AG04449 (cell line): ENCODE measurements at regions of chr11 and their contacts with region 1.

Region 1: DNA sequence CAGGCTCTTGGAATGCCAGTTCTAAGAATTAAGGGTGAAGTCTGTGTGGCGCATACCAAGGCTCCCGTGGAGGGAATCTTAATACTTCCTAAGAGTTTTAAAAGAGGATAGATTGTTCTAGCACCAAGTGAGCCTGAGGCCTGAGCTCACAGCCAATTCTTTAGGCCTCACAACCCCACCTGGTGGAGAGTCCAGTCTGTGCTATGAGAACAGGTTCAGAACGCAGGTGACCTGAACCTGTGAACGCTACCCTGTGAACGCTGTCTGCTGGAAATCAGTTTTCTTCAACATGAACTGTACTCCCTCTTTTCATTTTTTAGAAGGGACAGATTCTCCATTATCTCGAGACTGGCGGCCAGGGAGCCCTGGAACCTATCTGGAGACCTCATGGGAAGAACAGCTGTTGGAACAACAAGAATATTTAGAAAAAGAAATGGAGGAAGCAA is 43.2 kb upstream of the DLAT start:
- DNase-seq: no peak
- H3K4me3 ChIP-seq: no peak overlapping the region
- CTCF ChIP-seq: peak; percentile 60

Region 2: DNA sequence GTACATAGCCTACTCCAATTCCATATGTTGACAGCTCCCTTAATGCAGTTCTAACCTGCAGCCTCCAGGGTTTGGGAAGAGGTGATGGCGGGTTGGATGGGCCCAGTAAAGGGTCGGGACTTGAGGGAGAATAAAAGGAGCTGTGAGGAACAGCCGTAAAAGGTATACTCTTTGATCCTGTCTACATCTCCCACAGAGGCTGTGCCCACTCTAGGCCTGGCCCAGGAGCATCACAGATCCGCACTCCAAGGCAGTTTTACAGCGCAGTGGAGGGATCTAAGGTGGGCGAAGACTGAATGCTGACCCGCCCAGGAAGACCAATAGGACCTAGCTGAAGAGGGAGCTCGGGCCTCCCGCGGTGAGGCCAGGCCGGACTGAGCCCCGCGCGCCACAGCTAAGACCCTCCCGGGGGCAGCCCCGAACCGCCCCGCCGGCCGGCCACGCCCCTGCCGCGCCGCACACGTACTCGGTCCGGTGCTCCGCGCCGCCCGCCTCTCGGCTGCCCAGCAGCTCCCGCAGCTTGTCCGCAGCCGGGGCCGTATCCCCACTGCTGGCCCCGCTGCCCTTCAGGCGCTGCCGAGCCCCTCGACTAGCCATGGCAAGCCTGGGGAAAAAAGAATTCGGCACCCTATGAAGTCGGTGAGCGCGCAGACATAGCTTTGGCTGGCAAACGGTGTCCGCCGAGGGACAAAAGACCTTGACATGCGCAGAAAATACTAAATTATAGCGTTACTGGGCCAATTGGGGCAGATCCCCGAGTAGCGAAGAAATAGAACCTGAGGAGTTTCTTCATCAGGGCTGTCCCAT is 111.0 kb before region 1 on chr11 and contains the start of gene ALG9:
- CTCF ChIA-PET with region 1: interaction called, 50 read pairs
- POLR2A ChIA-PET with region 1: interaction called, 3 read pairs
- DNase-seq: peak; percentile 24
- H3K4me3 ChIP-seq: peak within 1 kb of the TSS; percentile 90
- CTCF ChIP-seq: peak; percentile 43

Region 3: DNA sequence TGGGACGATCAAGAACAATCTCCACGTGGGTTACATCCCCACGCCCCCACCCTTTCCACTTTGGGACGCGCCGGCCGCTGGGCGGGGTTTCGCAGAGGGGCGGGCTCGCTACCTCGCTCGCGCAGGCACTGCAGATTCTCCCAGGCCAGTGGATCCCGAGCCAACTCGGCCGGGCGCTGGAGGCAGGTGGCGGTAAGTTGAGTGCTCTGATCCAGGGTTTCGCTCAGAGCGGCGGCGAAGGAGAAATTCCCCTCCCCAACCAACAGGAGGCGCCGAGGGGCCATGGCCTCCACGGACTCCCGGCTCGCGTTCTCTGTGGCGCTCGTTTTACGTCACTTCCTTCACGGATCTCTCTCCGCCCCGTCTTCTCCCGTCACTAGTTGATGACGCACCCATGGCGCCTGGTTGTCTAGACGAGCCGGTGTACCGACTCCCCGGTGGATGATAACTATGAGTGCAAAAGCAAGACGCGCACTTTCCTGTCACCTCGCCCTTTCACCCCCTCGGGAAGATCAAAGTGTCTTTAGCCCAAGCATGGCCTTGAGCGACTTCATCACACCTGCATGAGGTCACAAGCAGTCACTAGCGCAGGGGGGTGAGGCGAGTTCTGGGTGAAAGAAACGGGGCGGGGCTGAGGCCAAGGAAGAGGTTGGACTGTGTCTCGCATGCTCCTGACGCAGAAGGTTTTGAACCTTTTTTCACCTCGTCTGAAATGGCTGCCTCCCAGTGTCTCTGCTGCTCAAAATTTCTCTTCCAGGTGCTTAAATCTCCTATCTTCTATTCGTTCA is 103.0 kb before region 1 on chr11 and contains the starts of genes CFAP68 and FDXACB1:
- CTCF ChIA-PET with region 1: interaction called, 50 read pairs
- POLR2A ChIA-PET with region 1: no interaction called
- DNase-seq: peak; percentile 76
- H3K4me3 ChIP-seq: peak within 1 kb of the TSS; percentile 94
- CTCF ChIP-seq: peak; percentile 95

Region 4: DNA sequence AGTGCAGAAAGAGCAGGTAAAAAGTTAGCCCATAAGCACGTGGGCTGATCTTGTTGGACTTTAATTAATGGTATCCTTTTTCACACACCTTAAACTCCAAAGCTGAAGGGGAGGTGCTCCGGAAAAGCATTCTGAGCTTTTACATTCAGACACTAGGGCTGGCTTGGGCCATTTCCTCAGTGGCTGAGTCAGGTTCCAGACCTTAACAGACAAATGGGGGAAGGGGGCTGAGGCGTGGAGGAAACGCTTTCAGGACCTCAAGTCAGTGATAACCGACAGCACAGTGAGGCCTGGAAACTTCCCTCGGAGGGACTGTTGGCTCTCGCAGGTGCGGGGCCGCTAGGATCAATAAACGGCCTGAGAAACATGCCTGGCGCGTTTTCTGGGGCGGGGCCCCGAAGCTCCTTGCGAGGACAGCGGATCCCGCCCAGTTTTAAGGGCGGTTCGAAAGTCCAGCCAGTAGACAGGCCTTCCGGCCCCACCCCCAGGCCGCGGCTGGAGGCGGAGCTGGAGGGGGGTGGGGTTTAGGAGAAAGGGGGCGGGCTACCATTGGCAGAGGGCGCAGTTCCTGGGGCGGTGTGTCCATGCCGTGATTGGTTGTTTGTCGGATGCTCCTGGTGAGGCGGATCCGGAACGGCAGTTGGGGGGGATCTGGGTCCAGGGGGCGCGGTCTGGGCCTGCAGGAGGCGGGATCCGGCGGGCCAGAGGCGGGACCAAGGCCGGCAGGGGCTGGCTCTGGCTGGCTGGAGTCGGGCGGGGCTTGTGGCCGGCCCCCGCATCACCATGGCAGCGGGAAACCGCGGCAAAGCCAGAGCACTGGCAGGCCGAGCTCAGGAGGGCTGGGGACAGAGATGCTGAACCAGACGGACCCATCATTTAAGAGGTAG is 55.3 kb before region 1 on chr11:
- CTCF ChIA-PET with region 1: interaction called, 134 read pairs
- POLR2A ChIA-PET with region 1: interaction called, 5 read pairs
- DNase-seq: peak; percentile 85
- H3K4me3 ChIP-seq: peak overlapping the region; percentile 49
- CTCF ChIP-seq: no peak

Region 5: GRCh38 chr11:111938687-111939160 is 43.3 kb before region 1 on chr11:
- CTCF ChIA-PET with region 1: interaction called, 34 read pairs
- POLR2A ChIA-PET with region 1: interaction called, 3 read pairs
- DNase-seq: no peak
- H3K4me3 ChIP-seq: peak overlapping the region; percentile 69
- CTCF ChIP-seq: no peak

Region 6: GRCh38 chr11:111944651-111945051 is 37.4 kb before region 1 on chr11:
- CTCF ChIA-PET with region 1: interaction called, 34 read pairs
- POLR2A ChIA-PET with region 1: interaction called, 4 read pairs
- DNase-seq: peak; percentile 77
- H3K4me3 ChIP-seq: no peak overlapping the region
- CTCF ChIP-seq: no peak

Region 7: DNA sequence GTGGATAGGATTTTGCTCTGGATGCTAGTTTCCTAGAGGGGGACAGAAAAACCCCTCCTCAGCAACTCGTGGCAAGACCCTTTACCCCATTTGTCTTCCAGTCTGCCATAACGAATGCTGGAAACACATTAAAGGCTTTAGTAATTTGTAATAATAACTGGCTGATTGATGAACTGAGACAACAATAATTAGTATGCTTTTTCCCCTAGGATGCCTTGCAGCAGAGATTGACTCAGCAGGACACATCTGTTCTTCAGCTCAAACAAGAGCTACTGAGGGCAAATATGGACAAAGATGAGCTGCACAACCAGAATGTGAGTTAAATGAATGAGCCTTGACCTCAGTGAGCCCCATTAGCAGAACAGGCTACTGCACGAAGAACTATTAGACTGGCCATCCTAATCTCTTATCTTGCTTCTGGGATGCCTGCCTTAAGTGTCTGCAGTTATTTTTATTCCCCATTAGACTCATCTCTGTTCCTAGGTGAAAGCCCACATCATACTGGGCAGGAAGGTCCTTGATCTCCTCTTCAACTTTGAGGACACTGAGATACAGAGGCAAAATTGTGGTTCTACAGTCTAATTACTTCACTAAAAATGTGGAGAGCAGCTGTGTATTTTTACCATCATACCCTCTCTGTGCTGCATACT is 10.3 kb after region 1 on chr11:
- CTCF ChIA-PET with region 1: interaction called, 13 read pairs
- POLR2A ChIA-PET with region 1: no interaction called
- DNase-seq: no peak
- H3K4me3 ChIP-seq: no peak overlapping the region
- CTCF ChIP-seq: no peak